AG04449 (cell line): ENCODE measurements at regions of chr10 and their contacts with region 1.

Region 1: DNA sequence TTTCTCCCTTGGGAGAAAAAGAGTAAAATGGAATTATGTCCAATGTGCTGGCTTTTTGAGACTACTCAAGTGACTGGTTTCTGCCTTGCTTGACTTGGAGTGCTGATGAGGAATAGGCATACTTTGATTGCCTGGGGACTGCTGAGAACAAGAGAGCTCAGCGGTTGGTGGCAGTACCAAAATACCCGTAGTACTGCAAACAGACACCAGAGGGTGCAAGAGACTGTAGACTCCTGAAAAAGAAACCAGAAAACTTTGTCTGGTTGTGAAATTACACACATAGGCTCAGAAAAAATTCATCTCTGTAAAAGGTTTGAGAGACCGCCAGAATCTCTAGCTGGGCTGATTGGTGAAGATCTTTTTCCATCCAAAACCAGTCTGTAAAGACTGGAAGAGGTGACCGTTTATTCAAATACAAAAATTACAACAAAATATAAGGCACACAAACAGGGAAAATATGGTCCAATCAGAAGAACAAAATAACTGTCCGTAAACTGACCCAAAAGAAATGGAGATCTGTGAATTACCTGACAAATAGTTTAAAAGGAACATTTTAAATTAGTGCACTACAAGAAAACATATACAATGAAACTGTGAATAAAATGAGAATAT is 18.5 kb downstream of the BICC1 start:
- DNase-seq: no peak
- H3K4me3 ChIP-seq: no peak overlapping the region
- CTCF ChIP-seq: peak; percentile 61

Region 2: GRCh38 chr10:58299580-58299979 is 231.6 kb before region 1 on chr10:
- CTCF ChIA-PET with region 1: no interaction called
- POLR2A ChIA-PET with region 1: no interaction called
- DNase-seq: no peak
- H3K4me3 ChIP-seq: no peak overlapping the region
- CTCF ChIP-seq: peak; percentile 80

Region 3: DNA sequence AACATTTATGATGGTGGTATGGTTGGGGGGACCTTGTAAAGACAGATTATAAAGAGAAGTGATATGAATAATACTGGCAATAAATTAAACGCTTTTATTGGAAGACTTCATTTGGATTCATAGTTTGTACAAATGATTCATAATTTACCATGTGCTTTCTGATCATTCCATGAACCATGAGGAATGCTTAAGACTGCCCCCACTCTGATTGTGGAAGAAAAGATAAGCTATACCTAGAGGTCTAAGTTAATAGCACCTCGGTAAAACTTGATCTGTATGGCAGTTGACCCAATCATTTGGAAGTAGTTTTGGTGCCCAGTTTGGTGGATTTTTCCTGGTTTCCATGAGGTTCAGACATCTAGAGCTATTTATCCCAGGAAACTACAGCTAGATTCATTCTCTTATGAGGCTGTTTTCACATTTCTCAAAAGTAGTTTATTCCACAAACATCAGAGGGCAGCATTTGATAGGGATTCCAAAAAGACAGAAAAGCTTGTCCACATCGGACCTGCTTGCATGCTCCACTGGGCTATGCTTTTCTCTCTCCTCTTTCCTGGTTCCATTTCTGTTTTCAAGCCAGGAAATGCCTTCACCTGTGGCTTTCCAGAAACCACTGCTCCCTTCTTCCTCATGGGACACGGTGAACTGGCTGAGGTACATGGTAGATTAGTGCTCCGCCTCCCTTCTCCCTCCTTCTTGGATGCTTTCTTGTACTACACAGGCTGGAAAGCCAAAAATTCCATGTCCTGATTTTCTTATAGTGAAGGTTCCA is 116.7 kb before region 1 on chr10:
- CTCF ChIA-PET with region 1: interaction called, 87 read pairs
- POLR2A ChIA-PET with region 1: no interaction called
- DNase-seq: no peak
- H3K4me3 ChIP-seq: no peak overlapping the region
- CTCF ChIP-seq: peak; percentile 20

Region 4: GRCh38 chr10:58518775-58519174 is 12.4 kb before region 1 on chr10:
- CTCF ChIA-PET with region 1: interaction called, 52 read pairs
- POLR2A ChIA-PET with region 1: no interaction called
- DNase-seq: no peak
- H3K4me3 ChIP-seq: no peak overlapping the region
- CTCF ChIP-seq: no peak

Region 5: DNA sequence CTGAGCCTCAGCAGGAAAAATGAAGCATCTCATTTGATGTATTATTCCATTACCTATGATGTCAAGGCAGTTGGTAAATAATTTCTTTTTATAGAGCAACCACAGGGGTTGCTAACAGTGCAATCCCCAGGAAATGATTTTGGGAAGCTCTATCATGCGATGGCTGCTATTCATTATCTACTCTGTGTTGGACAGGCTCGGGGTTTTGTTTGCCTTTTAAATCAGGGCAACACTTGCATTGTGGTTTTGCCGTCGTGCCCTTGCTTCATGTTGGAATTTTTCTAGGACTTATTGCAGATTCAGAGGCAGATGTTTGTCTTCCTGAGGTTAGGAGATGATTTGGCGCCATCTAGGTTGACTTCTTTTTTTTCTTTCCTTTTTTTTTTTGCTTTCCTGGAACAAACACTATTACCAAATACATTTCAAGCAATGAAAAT is 109.9 kb after region 1 on chr10:
- CTCF ChIA-PET with region 1: interaction called, 42 read pairs
- POLR2A ChIA-PET with region 1: no interaction called
- DNase-seq: peak; percentile 89
- H3K4me3 ChIP-seq: no peak overlapping the region
- CTCF ChIP-seq: peak; percentile 9

Region 6: DNA sequence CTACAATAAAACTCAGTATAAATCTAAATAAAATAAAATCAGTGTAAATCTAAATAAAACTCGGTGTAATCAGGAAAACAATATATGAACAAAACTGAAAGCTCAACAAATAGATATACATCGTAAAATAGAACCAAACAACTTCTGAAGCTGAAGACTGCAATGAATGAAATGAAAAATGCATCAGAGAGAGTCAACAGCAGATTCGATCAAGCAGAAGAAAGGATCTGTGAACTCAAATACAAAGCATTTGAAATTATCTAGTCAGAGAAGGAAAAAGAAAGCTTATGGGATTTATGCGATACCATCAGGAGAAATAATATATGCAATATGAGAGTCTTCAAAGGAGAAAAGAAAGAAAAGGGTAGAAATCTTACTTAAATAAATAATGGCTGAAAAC is 236.5 kb after region 1 on chr10:
- CTCF ChIA-PET with region 1: interaction called, 10 read pairs
- POLR2A ChIA-PET with region 1: no interaction called
- DNase-seq: no peak
- H3K4me3 ChIP-seq: no peak overlapping the region
- CTCF ChIP-seq: no peak

Region 7: GRCh38 chr10:58781873-58782488 is 250.8 kb after region 1 on chr10:
- CTCF ChIA-PET with region 1: interaction called, 29 read pairs
- POLR2A ChIA-PET with region 1: no interaction called
- DNase-seq: no peak
- H3K4me3 ChIP-seq: no peak overlapping the region
- CTCF ChIP-seq: no peak